Activated CD4-positive, alpha-beta memory T cell treated with anti-CD3 and anti-CD28 coated beads for 36 hours (primary cell): ENCODE measurements at regions of chr13 and their contacts with region 1.

Region 1: GRCh38 chr13:48037346-48038173 is at the start of gene NUDT15:
- DNase-seq: peak; percentile 97
- H3K4me3 Mint-ChIP-seq: peak within 1 kb of the TSS; percentile 96
- H3K27ac Mint-ChIP-seq: peak within 1 kb of the TSS; percentile 98
- H3K4me1 Mint-ChIP-seq: peaks cover 29% of the 10 kb centered on the region
- H3K27me3 Mint-ChIP-seq: no peaks in the 10 kb centered on the region
- total RNA-seq, gene NUDT15: 18.5 to 19.2 TPM

Region 2: DNA sequence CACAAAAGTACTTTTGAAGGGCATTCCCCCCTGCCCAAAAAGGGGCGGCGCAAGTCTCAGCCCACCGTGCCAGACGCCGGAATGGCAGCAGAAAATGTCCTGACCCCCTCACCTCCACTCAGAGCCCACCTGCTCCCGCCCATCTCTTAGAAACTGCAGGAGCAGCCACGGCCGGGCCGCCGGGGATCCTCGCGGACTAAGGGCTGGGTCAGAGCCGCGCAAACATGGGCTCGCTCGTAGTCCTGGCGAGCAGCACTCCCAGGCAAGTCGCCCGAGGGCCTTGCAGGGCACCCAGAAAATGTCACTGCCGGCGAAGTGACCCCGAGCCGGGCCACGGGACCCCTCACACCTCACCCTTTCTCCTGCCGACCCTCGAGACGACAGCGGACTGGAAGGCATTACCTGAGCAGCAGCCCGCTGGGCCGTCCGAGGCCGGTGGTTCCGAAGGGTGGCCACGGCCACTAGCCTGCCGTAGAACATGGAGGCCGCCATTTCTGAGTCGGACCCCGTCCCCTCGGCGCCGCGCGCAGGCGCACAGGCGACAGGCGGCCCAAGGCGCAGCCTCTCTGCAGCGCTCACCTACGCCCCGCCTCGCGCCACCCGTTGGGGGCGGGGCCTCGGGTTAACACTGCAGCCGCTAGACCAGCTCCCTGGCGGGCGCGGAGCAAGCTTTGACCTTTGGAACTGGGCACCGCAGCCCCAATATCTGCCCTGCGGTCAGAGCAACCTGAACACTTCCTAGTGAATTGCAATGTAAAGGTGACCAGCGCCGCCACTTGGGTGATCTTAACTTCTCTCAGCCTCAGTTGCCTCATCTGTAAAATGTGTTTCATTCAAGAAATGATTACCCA is 36.6 kb before region 1 on chr13 and contains the start of gene SUCLA2:
- CTCF ChIA-PET with region 1: interaction called, 13 read pairs
- POLR2A ChIA-PET with region 1: interaction called, 9 read pairs
- intact Hi-C with region 1: loop called (anchors 1 kb)
- DNase-seq: peak; percentile 93
- H3K4me3 Mint-ChIP-seq: peak within 1 kb of the TSS; percentile 93
- H3K27ac Mint-ChIP-seq: peak within 1 kb of the TSS; percentile 69
- H3K4me1 Mint-ChIP-seq: peaks cover 29% of the 10 kb centered on the region
- H3K27me3 Mint-ChIP-seq: no peaks in the 10 kb centered on the region
- total RNA-seq, gene SUCLA2: 39.2 to 41.3 TPM

Region 3: DNA sequence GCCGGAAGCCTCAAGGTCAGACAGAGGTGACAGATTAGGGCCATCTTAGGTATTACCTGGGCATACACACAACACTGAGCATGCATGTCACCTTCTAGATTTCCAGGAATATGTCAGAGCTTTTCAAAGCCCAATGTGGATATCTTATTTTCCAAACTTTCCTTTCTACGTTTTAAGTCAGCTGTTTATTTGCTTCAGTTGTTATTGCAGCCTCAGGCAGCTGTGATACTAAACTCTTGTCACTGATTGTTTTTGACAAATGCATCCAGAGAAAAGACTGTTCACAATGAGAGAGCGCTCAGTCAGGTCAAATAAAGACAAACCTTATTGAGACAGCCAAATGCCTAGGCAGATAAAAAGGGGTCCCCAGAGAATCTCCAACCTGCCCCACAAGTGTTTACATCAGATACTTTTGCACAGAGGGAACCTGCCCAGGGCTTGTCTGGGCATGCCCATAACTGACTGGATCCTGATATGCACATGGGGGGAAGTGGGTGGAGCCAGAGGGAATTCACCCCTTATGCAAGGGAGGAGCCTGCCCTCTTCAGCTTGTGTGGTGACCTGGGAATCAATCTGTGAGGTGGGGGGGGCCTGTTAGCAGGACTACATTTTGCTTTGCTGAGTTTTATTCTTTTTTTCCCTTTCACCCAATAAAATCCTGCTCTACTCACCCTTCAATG is 28.9 kb after region 1 on chr13:
- CTCF ChIA-PET with region 1: interaction called, 11 read pairs
- POLR2A ChIA-PET with region 1: no interaction called
- intact Hi-C with region 1: no loop called
- DNase-seq: peak; percentile 60
- H3K4me3 Mint-ChIP-seq: no peak overlapping the region
- H3K27ac Mint-ChIP-seq: peak overlapping the region; percentile 54
- H3K4me1 Mint-ChIP-seq: no peaks in the 10 kb centered on the region
- H3K27me3 Mint-ChIP-seq: no peaks in the 10 kb centered on the region

Region 4: DNA sequence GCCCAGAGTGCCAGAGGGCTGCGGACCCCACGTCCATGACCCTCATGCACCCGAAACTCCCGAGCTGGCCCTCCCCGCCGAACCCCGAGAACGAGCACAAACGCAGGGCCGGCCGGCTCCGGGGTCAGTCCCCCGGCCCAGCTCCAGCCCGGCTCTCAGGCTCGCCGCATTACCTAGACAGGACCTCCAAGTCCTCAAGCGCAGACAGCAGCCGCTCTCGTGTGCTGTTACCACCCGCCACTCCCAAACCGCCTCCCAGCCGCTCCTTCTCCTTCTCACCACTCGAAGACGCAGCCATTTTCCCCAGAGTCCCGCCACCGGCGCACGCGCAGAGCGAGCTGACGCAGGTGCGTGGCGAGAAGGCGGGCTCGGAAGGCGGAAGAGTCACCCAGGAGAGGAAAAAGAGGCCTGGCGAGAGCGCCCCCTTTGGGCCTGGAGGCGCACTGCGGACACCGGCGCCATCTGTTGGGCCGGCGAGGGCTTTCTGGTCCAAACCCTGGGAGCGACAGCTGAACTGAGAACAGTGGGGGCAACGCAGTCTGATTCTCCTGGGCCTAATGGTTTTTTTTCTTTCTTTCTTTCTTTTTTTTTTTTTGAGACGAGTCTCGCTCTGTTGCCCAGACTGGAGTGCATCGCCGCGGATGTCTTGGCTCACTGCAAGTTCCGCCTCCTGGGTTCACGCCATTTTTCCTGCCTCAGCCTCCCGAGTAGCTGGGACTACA is 57.4 kb after region 1 on chr13 and contains the start of gene MED4:
- CTCF ChIA-PET with region 1: interaction called, 30 read pairs
- POLR2A ChIA-PET with region 1: interaction called, 12 read pairs
- intact Hi-C with region 1: loop called (anchors 1 kb)
- DNase-seq: peak; percentile 98
- H3K4me3 Mint-ChIP-seq: peak within 1 kb of the TSS; percentile 97
- H3K27ac Mint-ChIP-seq: peak within 1 kb of the TSS; percentile 86
- H3K4me1 Mint-ChIP-seq: peaks cover 38% of the 10 kb centered on the region
- H3K27me3 Mint-ChIP-seq: peaks cover 1% of the 10 kb centered on the region
- total RNA-seq, gene MED4: 49.3 to 53.0 TPM

Region 5: GRCh38 chr13:48303359-48304142 is 266.0 kb after region 1 on chr13 and contains the start of gene RB1:
- CTCF ChIA-PET with region 1: interaction called, 5 read pairs
- POLR2A ChIA-PET with region 1: interaction called, 4 read pairs
- intact Hi-C with region 1: loop called (anchors 1 kb)
- DNase-seq: peak; percentile 94
- H3K4me3 Mint-ChIP-seq: peak within 1 kb of the TSS; percentile 97
- H3K27ac Mint-ChIP-seq: peak within 1 kb of the TSS; percentile 93
- H3K4me1 Mint-ChIP-seq: peaks cover 27% of the 10 kb centered on the region
- H3K27me3 Mint-ChIP-seq: no peaks in the 10 kb centered on the region
- total RNA-seq, gene RB1: 26.5 to 28.8 TPM

Region 6: GRCh38 chr13:48532506-48533499 is 495.2 kb after region 1 on chr13 and contains the start of gene RCBTB2:
- CTCF ChIA-PET with region 1: interaction called, 5 read pairs
- POLR2A ChIA-PET with region 1: no interaction called
- intact Hi-C with region 1: loop called (anchors 1 kb)
- DNase-seq: peak; percentile 99
- H3K4me3 Mint-ChIP-seq: peak within 1 kb of the TSS; percentile 92
- H3K27ac Mint-ChIP-seq: peak within 1 kb of the TSS; percentile 99
- H3K4me1 Mint-ChIP-seq: peaks cover 28% of the 10 kb centered on the region
- H3K27me3 Mint-ChIP-seq: no peaks in the 10 kb centered on the region
- total RNA-seq, gene RCBTB2: 1.5 to 1.8 TPM

Region 7: GRCh38 chr13:48580185-48580803 is 542.7 kb after region 1 on chr13:
- CTCF ChIA-PET with region 1: interaction called, 6 read pairs
- POLR2A ChIA-PET with region 1: no interaction called
- intact Hi-C with region 1: loop called (anchors 1 kb)
- DNase-seq: peak; percentile 75
- H3K4me3 Mint-ChIP-seq: no peak overlapping the region
- H3K27ac Mint-ChIP-seq: no peak overlapping the region
- H3K4me1 Mint-ChIP-seq: peaks cover 4% of the 10 kb centered on the region
- H3K27me3 Mint-ChIP-seq: peaks cover 7% of the 10 kb centered on the region